ENCODE measurements at regions of chr2 and their contacts with region 1.

Region 1: DNA sequence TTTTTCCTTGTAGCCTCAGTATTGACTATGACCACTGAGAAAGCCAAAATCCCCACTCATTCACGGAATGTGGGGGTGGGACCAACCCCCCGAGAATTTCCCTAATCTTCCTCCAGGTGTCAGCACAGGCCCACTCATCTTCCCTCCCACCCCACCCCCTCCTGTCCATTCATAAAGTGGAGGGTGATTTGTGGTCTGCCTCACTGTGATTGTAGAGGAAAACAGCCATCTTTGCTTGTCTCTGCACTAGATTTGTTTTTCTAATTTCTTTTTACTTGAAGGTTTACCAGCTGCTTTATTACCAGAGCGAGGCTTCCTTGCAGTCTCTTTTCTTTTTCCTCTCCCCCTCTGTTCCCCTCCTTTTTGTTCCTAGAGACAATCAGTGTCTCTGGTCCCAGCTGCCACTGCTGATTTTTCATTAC is 171.8 kb downstream of the ICOS start:
- DNase-seq: peak; percentile 48 to 54
- H3K4me3 ChIP-seq: no peak overlapping the region
- H3K4me3 Mint-ChIP-seq: no peak overlapping the region
- H3K27ac Mint-ChIP-seq: no peak overlapping the region
- H3K4me1 ChIP-seq: no peaks in the 10 kb centered on the region
- H3K4me1 Mint-ChIP-seq: peaks cover 19% of the 10 kb centered on the region
- H3K27me3 ChIP-seq: no peaks in the 10 kb centered on the region; the same call in 1 of the 2 replicates
- H3K27me3 Mint-ChIP-seq: peaks cover 4% of the 10 kb centered on the region
- CTCF ChIP-seq: peak; percentile 78 to 80

Region 2: DNA sequence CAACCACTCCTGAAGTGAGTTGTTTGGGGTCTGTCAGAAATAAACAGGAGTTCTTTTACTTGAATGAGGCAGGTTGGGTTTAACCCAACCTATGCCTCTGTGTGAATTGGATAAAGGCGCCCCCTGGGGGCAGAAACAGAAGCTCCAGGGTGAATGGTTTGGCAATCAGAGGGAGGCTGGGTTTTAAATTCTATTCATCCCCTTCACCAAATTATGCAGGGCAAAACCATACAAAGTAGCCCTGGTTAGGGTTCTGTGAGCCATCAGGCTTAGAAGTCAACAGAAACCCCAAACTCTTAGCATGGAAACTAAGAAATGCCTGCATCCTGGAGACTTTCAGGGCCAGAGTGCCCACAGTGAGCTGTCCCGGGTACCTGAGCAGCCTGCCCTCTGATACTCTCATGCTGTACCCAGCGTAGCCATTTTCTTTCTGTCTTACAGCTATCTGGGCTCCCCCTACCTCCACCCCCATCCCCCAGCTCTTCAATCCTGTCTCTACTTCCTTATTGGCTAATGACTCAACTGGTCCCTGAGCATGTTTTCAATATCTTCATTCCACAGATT is 69.7 kb after region 1 on chr2:
- CTCF ChIA-PET with region 1: no interaction called
- POLR2A ChIA-PET with region 1: no interaction called
- intact Hi-C with region 1: loop called (anchors 1 kb)
- DNase-seq: peak; percentile 44 to 60
- H3K4me3 ChIP-seq: no peak overlapping the region
- H3K4me3 Mint-ChIP-seq: no peak overlapping the region
- H3K27ac Mint-ChIP-seq: no peak overlapping the region
- H3K4me1 ChIP-seq: no peaks in the 10 kb centered on the region
- H3K4me1 Mint-ChIP-seq: no peaks in the 10 kb centered on the region
- H3K27me3 ChIP-seq: peaks cover 2% of the 10 kb centered on the region
- H3K27me3 Mint-ChIP-seq: peaks cover 3% of the 10 kb centered on the region
- CTCF ChIP-seq: peak; percentile 56 to 65

Measured in Caco-2 (cell line).